Esophagus squamous epithelium (tissue), 5 donors: ENCODE measurements at regions of chr18 and their contacts with region 1.

Region 1: GRCh38 chr18:499551-500408 is 721 bp downstream of the COLEC12 start:
- DNase-seq: no peak
- H3K4me3 ChIP-seq: peak overlapping the region; percentile 41 to 67 (median 54)
- H3K27ac ChIP-seq: peak overlapping the region in 3 of 4 donors; percentile 52 to 69 (median 68)
- H3K4me1 ChIP-seq: peaks cover 4 to 24% (median 8%) of the 10 kb centered on the region in 3 donors
- H3K27me3 ChIP-seq: peaks cover 0 to 55% (median 0%) of the 10 kb centered on the region in 4 donors
- CTCF ChIP-seq: no peak
- POLR2A ChIP-seq: no peak

Region 2: GRCh38 chr18:551404-552061 is 51.8 kb after region 1 on chr18:
- intact Hi-C with region 1: loop called (anchors 10 kb)
- DNase-seq: no peak
- H3K4me3 ChIP-seq: no peak overlapping the region
- H3K27ac ChIP-seq: no peak overlapping the region
- H3K4me1 ChIP-seq: no peaks in the 10 kb centered on the region
- H3K27me3 ChIP-seq: peaks cover 0 to 5% (median 0%) of the 10 kb centered on the region in 4 donors
- CTCF ChIP-seq: no peak
- POLR2A ChIP-seq: no peak